OCI-LY7 (cell line): ENCODE measurements at regions of chr3 and their contacts with region 1.

Region 1: DNA sequence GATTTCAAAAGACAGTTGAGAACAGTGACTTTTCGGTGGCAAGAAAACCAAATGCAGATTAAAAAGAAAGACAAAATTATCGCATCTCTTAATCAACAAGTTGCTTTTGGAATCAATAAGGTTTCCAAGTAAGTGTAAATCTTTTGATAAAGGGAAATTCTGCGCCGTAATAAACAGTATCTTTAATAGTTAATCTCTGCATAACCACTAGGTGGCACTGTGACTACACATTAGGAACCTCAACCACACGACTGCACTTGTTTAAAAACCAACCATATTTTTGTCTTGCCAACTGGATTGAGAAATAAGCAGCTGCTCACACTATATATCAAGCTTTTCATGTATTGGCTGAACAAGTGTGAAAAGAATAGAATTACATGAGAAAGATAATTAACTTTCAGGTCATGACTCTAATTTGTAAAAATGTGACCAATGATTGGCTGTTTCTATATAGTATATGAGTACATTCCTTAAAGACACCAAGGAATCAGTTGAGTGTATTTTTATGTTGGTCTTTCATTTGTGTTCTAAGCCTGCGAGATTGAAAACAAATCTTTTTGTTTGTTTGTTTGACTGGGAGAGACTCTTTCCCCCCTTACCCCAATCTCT is 72.7 kb downstream of the DZIP3 start:
- DNase-seq: peak; percentile 80
- H3K4me3 ChIP-seq: no peak overlapping the region
- H3K27ac ChIP-seq: no peak overlapping the region
- H3K4me1 ChIP-seq: no peaks in the 10 kb centered on the region
- CTCF ChIP-seq: peak; percentile 95

Region 2: DNA sequence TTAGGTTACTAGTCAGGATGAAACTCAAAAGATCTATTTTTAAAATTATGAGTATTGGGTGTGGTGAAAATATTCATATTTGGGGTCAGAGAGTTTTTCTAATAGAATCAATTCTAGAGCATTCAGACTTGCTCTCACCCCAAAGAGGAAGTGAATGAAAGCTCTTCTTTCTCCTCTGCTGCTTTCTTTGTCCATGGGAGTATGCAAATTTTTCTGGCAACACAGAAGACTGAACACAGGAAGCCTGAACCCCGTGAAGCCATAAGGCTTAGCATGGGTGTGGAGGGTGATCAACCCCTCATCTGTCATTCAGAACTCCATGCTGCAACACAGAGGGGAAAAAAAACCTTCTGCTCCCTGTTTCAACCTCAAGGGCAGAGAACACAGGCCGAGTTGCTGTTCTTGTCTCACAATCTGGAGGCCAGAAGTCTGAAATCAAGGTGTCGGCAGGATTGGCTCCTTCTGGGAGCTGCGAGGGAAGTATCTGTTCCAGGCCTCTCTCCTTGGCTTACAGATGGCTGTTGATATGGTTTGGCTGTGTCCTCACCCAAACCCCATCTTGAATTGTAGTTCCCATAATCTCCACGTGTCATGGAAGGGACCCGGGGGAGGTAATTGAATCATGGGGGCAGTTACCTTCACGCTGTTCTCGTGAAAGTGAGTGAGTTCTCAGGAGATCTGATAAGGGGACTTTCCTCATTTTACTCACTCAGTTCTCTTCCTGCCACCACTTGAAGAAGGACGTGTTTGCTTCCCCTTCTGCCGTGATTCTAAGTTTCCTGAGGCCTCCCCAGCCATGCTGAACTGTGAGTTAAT is 537.7 kb before region 1 on chr3:
- CTCF ChIA-PET with region 1: no interaction called
- POLR2A ChIA-PET with region 1: no interaction called
- intact Hi-C with region 1: no loop called
- DNase-seq: peak; percentile 94
- H3K4me3 ChIP-seq: peak overlapping the region; percentile 81
- H3K27ac ChIP-seq: peak overlapping the region; percentile 95
- H3K4me1 ChIP-seq: peaks cover 62% of the 10 kb centered on the region
- CTCF ChIP-seq: 0 out of 2 replicates have a peak, but pooled peaks have one; percentile 1

Region 3: GRCh38 chr3:108914774-108915641 is 252.8 kb after region 1 on chr3:
- CTCF ChIA-PET with region 1: interaction called, 3 read pairs
- POLR2A ChIA-PET with region 1: no interaction called
- intact Hi-C with region 1: loop called (anchors 1 kb)
- DNase-seq: peak; percentile 56
- H3K4me3 ChIP-seq: no peak overlapping the region
- H3K27ac ChIP-seq: no peak overlapping the region
- H3K4me1 ChIP-seq: no peaks in the 10 kb centered on the region
- CTCF ChIP-seq: peak; percentile 91

Region 4: DNA sequence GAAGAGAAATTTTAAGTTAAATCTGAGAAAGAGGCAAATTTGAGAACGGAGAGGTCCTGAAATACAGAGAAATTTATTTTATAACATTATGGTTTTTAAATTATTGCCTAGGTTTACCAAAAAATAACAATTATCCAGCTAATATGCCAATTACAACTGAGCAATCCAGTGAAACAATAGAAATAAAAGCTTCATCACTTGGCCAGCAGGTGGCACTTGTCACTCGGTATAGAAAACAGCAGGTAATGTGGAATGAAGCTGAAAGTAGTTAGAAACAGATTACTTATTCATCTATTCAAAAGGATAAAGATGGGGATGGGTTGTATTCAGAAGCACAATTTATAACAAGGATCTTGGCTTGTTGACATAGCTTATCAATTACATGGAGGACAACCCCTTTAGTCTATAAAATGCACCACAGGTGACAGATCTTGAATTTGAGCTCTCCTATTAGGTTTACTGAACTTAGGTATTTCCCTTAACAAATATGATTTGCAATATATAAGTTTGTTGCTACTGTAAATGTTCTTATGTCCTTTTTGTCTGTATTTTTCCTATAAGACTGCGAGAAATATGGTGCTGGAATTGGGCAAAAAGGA is 361.5 kb after region 1 on chr3:
- CTCF ChIA-PET with region 1: no interaction called
- POLR2A ChIA-PET with region 1: no interaction called
- intact Hi-C with region 1: loop called (anchors 2 kb)
- DNase-seq: peak; percentile 47
- H3K4me3 ChIP-seq: no peak overlapping the region
- H3K27ac ChIP-seq: no peak overlapping the region
- H3K4me1 ChIP-seq: no peaks in the 10 kb centered on the region
- CTCF ChIP-seq: peak; percentile 94

Region 5: GRCh38 chr3:109081746-109082510 is 419.7 kb after region 1 on chr3:
- CTCF ChIA-PET with region 1: no interaction called
- POLR2A ChIA-PET with region 1: no interaction called
- intact Hi-C with region 1: loop called (anchors 1 kb)
- DNase-seq: peak; percentile 39
- H3K4me3 ChIP-seq: no peak overlapping the region
- H3K27ac ChIP-seq: no peak overlapping the region
- H3K4me1 ChIP-seq: no peaks in the 10 kb centered on the region
- CTCF ChIP-seq: peak; percentile 88